Dorsolateral prefrontal cortex (tissue), 120 donors: ENCODE measurements at regions of chr20 and their contacts with region 1.

Region 1: GRCh38 chr20:4720041-4720976 is 1.4 kb upstream of the PRND start:
- DNase-seq: peak; percentile 56 to 86 (median 82)
- H3K4me3 ChIP-seq: peak overlapping the region in 25 of 59 donors; percentile 0 to 50 (median 14)
- H3K27ac ChIP-seq: peak overlapping the region; percentile 72 to 98 (median 95)
- H3K27me3 ChIP-seq: no peaks in the 10 kb centered on the region
- CTCF ChIP-seq: peak; percentile 65 to 94 (median 86)

Region 2: DNA sequence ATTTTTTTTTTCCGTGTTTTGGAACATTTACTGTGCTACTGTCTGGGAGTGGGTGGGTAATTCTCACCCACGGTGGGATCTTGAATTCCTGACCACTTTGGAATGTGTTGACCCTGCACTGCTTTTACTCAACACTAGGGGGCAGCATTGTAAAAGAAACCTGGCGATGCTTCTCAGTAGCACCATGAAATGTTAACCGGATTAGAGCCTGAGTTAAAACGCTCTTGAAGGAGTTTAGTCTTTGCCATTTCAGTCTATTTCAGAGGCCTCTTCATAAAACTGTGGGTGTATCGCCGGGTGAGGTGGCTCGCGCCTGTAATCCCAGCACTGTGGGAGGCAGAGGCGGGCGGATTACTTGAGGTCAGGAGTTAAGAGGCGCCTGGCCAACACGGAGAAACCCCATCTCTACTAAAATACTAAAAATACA is 113.0 kb before region 1 on chr20:
- intact Hi-C with region 1: loop called in 1 of 2 experiments (anchors 1 kb)
- DNase-seq: peak in 7 of 10 donors; percentile 32 to 70 (median 60)
- H3K4me3 ChIP-seq: peak overlapping the region in 6 of 59 donors; percentile 10 to 30 (median 14)
- H3K27ac ChIP-seq: peak overlapping the region in 42 of 59 donors; percentile 16 to 78 (median 52)
- H3K27me3 ChIP-seq: peaks cover 0 to 3% (median 0%) of the 10 kb centered on the region in 45 donors
- CTCF ChIP-seq: peak; percentile 93 to 100 (median 97)